ENCODE measurements at regions of chr7 and their contacts with region 1.

Region 1: DNA sequence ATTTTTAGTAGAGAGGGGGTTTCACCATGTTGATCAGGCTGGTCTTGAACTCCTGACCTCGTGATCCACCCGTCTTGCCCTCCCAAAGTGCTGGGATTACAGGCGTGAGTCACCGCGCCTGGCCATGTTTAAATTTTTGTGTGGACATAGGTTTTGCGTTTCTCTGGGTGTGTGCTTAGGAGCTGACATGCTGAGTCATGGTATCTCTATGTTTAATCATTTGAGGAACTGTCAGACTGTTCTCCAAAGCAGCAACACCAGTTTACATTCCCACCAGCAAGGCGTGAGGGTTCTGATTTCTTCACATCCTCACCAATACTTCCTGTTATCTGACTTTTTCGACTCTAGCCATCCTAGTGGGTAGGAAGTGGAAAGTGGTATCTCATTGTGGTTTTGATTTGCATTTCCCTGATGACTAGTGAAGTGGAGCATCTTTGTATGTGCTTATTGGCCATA is 153.7 kb downstream of the DNAJB6 start:
- DNase-seq: peak; percentile 67
- H3K4me3 Mint-ChIP-seq: no peak overlapping the region
- H3K27ac Mint-ChIP-seq: peak overlapping the region; percentile 69
- H3K4me1 Mint-ChIP-seq: peaks cover 55% of the 10 kb centered on the region
- H3K27me3 Mint-ChIP-seq: peaks cover 16% of the 10 kb centered on the region

Region 2: GRCh38 chr7:156397249-156397648 is 1093.2 kb before region 1 on chr7:
- intact Hi-C with region 1: no loop called
- DNase-seq: no peak
- H3K4me3 Mint-ChIP-seq: no peak overlapping the region
- H3K27ac Mint-ChIP-seq: no peak overlapping the region
- H3K4me1 Mint-ChIP-seq: no peaks in the 10 kb centered on the region
- H3K27me3 Mint-ChIP-seq: no peaks in the 10 kb centered on the region

Region 3: DNA sequence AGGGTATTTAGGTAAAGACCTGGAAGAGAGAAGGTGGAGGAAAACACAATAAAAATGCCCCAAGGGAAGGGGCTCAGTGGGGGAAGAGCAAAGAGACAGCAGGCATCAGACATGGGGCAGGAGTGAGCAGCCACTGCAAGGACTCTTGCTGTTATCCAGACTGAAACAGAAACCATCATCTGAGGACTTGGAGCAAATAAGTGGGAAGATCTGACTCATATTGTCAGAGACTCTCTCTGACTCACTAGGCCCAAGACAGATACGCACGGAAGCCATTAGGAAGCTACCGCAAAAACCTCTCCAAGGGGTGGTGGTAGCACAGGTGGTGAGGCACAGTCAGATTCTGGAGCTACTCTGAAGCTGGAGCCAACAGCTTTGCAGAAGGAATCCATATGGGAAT is 739.2 kb before region 1 on chr7:
- intact Hi-C with region 1: loop called (anchors 10 kb)
- DNase-seq: peak; percentile 44
- H3K4me3 Mint-ChIP-seq: peak overlapping the region; percentile 16
- H3K27ac Mint-ChIP-seq: no peak overlapping the region
- H3K4me1 Mint-ChIP-seq: peaks cover 16% of the 10 kb centered on the region
- H3K27me3 Mint-ChIP-seq: no peaks in the 10 kb centered on the region

Region 4: GRCh38 chr7:157432957-157433576 is 57.4 kb before region 1 on chr7:
- intact Hi-C with region 1: loop called (anchors 1 kb)
- DNase-seq: peak; percentile 49
- H3K4me3 Mint-ChIP-seq: peak overlapping the region; percentile 66
- H3K27ac Mint-ChIP-seq: peak overlapping the region; percentile 43
- H3K4me1 Mint-ChIP-seq: peaks cover 13% of the 10 kb centered on the region
- H3K27me3 Mint-ChIP-seq: peaks cover 7% of the 10 kb centered on the region

Region 5: DNA sequence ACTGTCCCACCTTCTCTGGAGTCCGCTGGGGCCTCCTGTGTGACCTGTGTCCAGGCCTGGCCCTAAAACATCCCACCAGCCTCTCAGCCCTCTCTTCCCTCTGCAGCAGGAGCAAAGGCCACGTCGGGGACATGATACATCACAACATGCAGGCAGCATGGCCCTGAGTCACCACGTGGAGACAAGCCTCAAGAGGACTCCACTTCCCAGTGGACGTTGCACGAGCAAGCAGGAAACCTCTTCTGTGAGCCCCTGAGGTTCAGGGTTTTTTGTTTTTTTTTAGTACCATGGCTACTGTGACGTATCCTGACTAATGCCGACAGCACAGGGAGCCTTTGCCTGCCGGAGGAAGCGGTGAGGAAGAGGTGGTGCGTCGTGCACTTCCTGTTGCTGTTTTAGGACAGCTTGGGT is 12.2 kb after region 1 on chr7:
- intact Hi-C with region 1: loop called (anchors 1 kb)
- DNase-seq: peak; percentile 69
- H3K4me3 Mint-ChIP-seq: peak overlapping the region; percentile 69
- H3K27ac Mint-ChIP-seq: peak overlapping the region; percentile 97
- H3K4me1 Mint-ChIP-seq: peaks cover 33% of the 10 kb centered on the region
- H3K27me3 Mint-ChIP-seq: peaks cover 12% of the 10 kb centered on the region

Region 6: DNA sequence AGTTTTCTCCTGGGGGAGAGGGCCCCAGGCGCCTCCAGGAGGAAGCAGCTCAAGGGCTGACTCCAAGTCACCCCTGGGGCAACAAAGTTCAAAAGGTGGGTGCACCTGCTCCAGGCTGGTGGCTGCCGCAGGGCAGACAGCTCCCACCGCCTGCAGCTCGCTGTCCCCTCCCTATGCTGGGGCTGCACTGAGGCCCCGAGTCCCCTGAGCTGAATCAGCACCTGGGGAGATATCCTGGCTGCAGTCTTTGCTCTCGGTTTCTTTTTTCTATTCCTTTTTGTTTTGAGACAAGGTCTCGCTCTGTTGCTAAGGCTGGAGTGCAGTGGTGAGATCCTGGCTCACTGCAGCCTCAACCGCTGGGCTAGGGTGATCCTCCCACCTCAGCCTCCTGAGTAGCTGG is 29.8 kb after region 1 on chr7:
- intact Hi-C with region 1: no loop called
- DNase-seq: no peak
- H3K4me3 Mint-ChIP-seq: no peak overlapping the region
- H3K27ac Mint-ChIP-seq: no peak overlapping the region
- H3K4me1 Mint-ChIP-seq: no peaks in the 10 kb centered on the region
- H3K27me3 Mint-ChIP-seq: peaks cover 14% of the 10 kb centered on the region

Region 7: GRCh38 chr7:157555313-157555712 is 64.8 kb after region 1 on chr7:
- intact Hi-C with region 1: no loop called
- DNase-seq: no peak
- H3K4me3 Mint-ChIP-seq: no peak overlapping the region
- H3K27ac Mint-ChIP-seq: no peak overlapping the region
- H3K4me1 Mint-ChIP-seq: no peaks in the 10 kb centered on the region
- H3K27me3 Mint-ChIP-seq: no peaks in the 10 kb centered on the region

Region 8: GRCh38 chr7:157612664-157613561 is 122.4 kb after region 1 on chr7:
- intact Hi-C with region 1: loop called (anchors 2 kb)
- DNase-seq: peak; percentile 59
- H3K4me3 Mint-ChIP-seq: peak overlapping the region; percentile 82
- H3K27ac Mint-ChIP-seq: no peak overlapping the region
- H3K4me1 Mint-ChIP-seq: peaks cover 7% of the 10 kb centered on the region
- H3K27me3 Mint-ChIP-seq: no peaks in the 10 kb centered on the region